Mammary epithelial cell (primary cell): ENCODE measurements at regions of chr11 and their contacts with region 1.

Region 1: GRCh38 chr11:102279641-102280170 is 37.6 kb upstream of the BIRC3 start:
- DNase-seq: peak; percentile 41
- H3K4me3 ChIP-seq: peak overlapping the region; percentile 17 to 24 (median 18)
- H3K27ac ChIP-seq: peak overlapping the region; percentile 20
- H3K4me1 ChIP-seq: peaks cover 11% of the 10 kb centered on the region
- H3K27me3 ChIP-seq: no peaks in the 10 kb centered on the region
- CTCF ChIP-seq: peak; percentile 22 to 31

Region 2: DNA sequence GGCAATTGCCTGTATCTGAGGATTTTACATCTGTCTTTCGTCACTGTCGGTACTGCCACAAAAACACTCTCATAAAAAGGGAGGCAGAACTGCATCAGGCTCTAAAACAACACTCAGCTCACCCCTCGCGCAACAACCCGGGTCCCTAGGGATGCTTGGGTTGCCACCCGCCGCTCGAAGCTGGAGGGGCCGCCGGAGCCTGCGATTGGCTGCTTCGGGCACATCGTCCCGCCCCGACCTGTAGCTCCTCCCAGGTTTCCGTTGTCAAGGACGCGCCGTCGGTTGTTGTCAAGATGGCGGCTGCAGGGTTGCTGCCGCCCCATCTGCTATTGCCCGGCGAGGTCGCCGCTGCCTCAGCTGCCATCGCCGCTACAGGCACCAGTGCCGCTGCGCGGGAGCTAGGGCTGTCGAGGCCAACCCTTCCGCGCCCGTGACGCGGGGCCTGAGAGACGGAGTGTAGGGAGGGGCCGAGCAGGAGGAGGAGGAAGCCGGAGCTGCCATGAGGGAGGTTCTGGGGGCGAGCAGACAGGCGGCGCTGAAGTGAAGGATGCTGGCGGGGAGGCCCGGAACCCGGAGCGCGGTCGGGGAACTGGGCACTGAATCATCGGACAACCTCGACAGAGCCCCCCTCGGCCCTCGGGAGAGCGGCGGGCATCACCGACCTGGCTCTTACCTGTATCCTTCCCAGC is 364.8 kb before region 1 on chr11 and contains the start of gene CEP126:
- CTCF ChIA-PET with region 1: no interaction called
- dilution Hi-C with region 1: no loop called
- in situ Hi-C with region 1: no loop called
- intact Hi-C with region 1: loop called (anchors 10 kb)
- DNase-seq: peak; percentile 92
- H3K4me3 ChIP-seq: peak within 1 kb of the TSS; percentile 75 to 84 (median 82)
- H3K27ac ChIP-seq: peak within 1 kb of the TSS; percentile 93
- H3K4me1 ChIP-seq: peaks cover 12% of the 10 kb centered on the region
- H3K27me3 ChIP-seq: no peaks in the 10 kb centered on the region
- CTCF ChIP-seq: peak; percentile 20 to 59
- total RNA-seq, gene CEP126: 2.2 to 2.8 TPM

Region 3: GRCh38 chr11:102157219-102157618 is 122.5 kb before region 1 on chr11:
- CTCF ChIA-PET with region 1: no interaction called
- dilution Hi-C with region 1: no loop called
- in situ Hi-C with region 1: no loop called
- intact Hi-C with region 1: no loop called
- DNase-seq: peak; percentile 87
- H3K4me3 ChIP-seq: no peak overlapping the region
- H3K27ac ChIP-seq: peak overlapping the region; percentile 82
- H3K4me1 ChIP-seq: peaks cover 29% of the 10 kb centered on the region
- H3K27me3 ChIP-seq: no peaks in the 10 kb centered on the region
- CTCF ChIP-seq: no peak

Region 4: DNA sequence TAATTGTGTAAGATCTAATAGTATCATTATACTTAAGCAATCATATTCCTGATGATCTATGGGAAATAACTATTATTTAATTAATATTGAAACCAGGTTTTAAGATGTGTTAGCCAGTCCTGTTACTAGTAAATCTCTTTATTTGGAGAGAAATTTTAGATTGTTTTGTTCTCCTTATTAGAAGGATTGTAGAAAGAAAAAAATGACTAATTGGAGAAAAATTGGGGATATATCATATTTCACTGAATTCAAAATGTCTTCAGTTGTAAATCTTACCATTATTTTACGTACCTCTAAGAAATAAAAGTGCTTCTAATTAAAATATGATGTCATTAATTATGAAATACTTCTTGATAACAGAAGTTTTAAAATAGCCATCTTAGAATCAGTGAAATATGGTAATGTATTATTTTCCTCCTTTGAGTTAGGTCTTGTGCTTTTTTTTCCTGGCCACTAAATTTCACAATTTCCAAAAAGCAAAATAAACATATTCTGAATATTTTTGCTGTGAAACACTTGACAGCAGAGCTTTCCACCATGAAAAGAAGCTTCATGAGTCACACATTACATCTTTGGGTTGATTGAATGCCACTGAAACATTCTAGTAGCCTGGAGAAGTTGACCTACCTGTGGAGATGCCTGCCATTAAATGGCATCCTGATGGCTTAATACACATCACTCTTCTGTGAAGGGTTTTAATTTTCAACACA is 44.0 kb after region 1 on chr11:
- CTCF ChIA-PET with region 1: no interaction called
- dilution Hi-C with region 1: loop called (anchors 5 kb)
- in situ Hi-C with region 1: no loop called
- intact Hi-C with region 1: no loop called
- DNase-seq: peak; percentile 57
- H3K4me3 ChIP-seq: no peak overlapping the region
- H3K27ac ChIP-seq: no peak overlapping the region
- H3K4me1 ChIP-seq: peaks cover 10% of the 10 kb centered on the region
- H3K27me3 ChIP-seq: no peaks in the 10 kb centered on the region
- CTCF ChIP-seq: no peak